Dorsolateral prefrontal cortex (tissue), 120 donors: ENCODE measurements at regions of chr4 and their contacts with region 1.

Region 1: DNA sequence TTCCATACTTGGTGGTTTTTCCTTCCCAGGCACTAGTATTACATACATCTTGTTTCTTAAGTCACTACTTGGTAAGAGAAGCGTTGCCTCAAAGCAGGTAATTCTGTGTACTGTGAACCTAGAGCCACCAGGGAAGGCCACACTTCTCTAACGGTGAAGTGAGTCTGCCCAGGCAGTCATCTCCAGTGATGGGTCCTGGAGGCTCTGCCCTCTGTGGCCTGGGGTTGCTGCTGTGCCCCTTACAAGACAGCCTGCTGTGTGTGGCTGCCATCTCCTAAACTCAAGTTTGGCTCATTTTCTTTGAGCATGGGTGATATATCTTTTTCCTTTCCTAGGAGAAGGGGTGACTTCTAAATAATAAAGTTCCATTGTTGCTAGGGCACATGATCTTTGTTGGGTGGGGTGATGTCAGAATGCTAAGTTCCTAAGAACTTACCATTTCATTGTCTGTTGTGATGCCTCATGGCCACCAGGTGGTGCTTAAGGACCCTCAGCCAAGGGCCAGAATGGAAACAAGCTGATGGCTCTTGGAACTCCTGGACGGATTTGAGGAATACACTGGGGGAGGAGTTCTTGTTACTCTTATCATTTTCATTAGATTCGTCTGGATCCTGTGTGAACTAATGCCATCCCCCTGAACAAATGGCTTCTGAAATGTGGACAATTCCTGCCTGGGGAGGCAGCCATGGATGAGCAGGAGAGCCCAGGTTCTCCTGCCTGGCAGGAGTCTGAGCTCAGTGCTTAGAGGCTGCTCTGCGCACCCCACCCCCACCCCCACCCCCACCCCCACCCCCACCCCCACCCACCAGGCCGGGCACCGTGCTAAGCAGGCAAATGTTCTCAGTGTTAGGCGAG is 41.1 kb upstream of the WDR1 start:
- DNase-seq: peak in 9 of 10 donors; percentile 25 to 72 (median 54)
- H3K4me3 ChIP-seq: peak overlapping the region in 1 of 59 donors; percentile 6
- H3K27ac ChIP-seq: peak overlapping the region in 1 of 59 donors; percentile 47
- H3K27me3 ChIP-seq: no peaks in the 10 kb centered on the region
- CTCF ChIP-seq: peak; percentile 51 to 86 (median 75)

Region 2: GRCh38 chr4:10116580-10117358 is 40.9 kb before region 1 on chr4 and contains the start of gene WDR1:
- intact Hi-C with region 1: loop called in 1 of 2 experiments (anchors 5 kb)
- DNase-seq: peak; percentile 88 to 95 (median 93)
- H3K4me3 ChIP-seq: peak within 1 kb of the TSS; percentile 60 to 89 (median 78)
- H3K27ac ChIP-seq: peak within 1 kb of the TSS; percentile 72 to 99 (median 92)
- H3K27me3 ChIP-seq: no peaks in the 10 kb centered on the region
- CTCF ChIP-seq: peak in 15 of 56 donors; percentile 3 to 48 (median 18)
- total RNA-seq, gene WDR1: 67.7 to 164 (median 107) TPM

Region 3: GRCh38 chr4:10212400-10212799 is 54.7 kb after region 1 on chr4:
- intact Hi-C with region 1: no loop called
- DNase-seq: no peak
- H3K4me3 ChIP-seq: no peak overlapping the region
- H3K27ac ChIP-seq: no peak overlapping the region
- H3K27me3 ChIP-seq: peaks cover 0 to 7% (median 0%) of the 10 kb centered on the region in 45 donors
- CTCF ChIP-seq: no peak

Region 4: GRCh38 chr4:10554694-10555093 is 397.0 kb after region 1 on chr4:
- intact Hi-C with region 1: loop called (anchors 5 kb)
- DNase-seq: peak in 4 of 10 donors; percentile 24 to 70 (median 59)
- H3K4me3 ChIP-seq: peak overlapping the region in 14 of 59 donors; percentile 9 to 39 (median 17)
- H3K27ac ChIP-seq: no peak overlapping the region
- H3K27me3 ChIP-seq: peaks cover 0 to 10% (median 0%) of the 10 kb centered on the region in 45 donors
- CTCF ChIP-seq: peak; percentile 72 to 94 (median 84)